Pancreas (tissue), 10 donors: ENCODE measurements at regions of chr6 and their contacts with region 1.

Region 1: DNA sequence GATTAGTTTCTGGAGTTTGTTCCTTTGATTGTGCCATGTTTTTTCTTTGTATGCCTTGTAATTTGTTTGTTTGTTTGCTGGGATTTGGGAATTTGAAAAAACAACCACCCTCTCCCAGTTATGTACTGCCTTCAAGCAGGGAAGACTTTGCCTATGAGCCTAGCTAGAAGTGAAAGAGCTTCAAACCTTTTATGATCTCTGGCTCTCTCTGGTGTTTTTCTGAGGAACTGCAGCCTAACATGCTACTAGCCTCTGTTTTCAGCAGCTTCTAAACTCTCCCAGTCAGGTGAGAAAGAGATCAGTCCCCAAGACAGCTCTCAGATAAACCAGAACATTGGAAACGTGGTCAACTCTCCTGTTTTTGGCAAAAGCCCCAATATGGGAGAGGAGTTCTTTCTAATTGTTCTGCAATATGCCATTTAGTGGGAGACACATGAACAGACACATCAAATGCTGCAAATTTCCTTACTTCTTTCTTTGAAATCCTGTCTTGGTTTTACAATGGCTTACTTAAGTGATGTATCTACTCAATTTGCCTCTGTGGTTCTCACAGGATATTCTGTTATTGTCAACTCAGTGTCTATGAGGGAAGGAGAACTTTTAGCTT is 58.9 kb upstream of the SERINC1 start:
- DNase-seq: peak in 3 of 6 donors; percentile 36 to 68 (median 37)
- ATAC-seq: peak; percentile 75 to 99 (median 98)
- H3K4me3 ChIP-seq: no peak overlapping the region
- H3K27ac ChIP-seq: no peak overlapping the region
- H3K4me1 ChIP-seq: no peaks in the 10 kb centered on the region
- H3K27me3 ChIP-seq: no peaks in the 10 kb centered on the region
- CTCF ChIP-seq: peak; percentile 54 to 81 (median 70)

Region 2: GRCh38 chr6:120908767-120909166 is 1621.8 kb before region 1 on chr6:
- intact Hi-C with region 1: no loop called
- DNase-seq: no peak
- ATAC-seq: no peak
- H3K4me3 ChIP-seq: no peak overlapping the region
- H3K27ac ChIP-seq: no peak overlapping the region
- H3K4me1 ChIP-seq: no peaks in the 10 kb centered on the region
- H3K27me3 ChIP-seq: no peaks in the 10 kb centered on the region
- CTCF ChIP-seq: no peak

Region 3: DNA sequence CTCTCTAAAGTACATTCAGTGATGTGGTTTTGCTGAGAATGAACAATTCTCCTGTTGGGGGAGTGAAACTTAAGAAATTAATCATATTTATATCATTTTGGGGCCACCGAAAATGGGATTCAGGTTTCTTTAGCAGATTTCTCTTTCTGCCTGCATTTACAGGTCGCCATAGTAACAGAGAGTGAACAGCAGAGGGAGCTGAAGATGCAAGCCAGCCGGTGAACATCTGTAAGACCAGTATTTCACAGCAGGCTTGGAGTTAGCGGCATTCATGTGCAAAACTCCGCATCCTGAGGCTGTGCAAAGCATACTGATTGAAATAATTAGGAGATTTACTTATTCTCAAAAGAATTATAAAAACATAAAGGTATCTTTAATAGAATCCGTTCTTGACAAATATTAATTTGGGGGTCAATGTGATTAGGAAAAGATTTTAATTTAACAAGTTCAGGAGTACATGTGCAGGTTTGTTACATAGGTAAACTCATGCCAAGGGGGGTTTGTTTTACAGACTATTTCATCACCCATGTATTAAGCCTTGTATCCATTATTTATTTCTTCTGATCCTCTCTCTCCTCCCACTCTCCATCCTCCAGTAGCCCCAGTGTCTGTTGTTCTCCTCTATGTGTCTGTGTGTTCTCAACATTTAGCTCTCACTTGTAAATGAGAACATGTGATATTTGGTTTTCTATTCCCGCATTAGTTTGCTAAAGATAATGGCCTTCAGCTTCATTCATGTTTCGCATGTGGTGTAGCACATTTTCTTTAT is 148.9 kb before region 1 on chr6:
- intact Hi-C with region 1: loop called in 1 of 3 experiments (anchors 10 kb)
- DNase-seq: peak in 3 of 6 donors; percentile 36 to 63 (median 43)
- ATAC-seq: peak; percentile 75 to 96 (median 94)
- H3K4me3 ChIP-seq: no peak overlapping the region
- H3K27ac ChIP-seq: no peak overlapping the region
- H3K4me1 ChIP-seq: no peaks in the 10 kb centered on the region
- H3K27me3 ChIP-seq: no peaks in the 10 kb centered on the region
- CTCF ChIP-seq: peak in 3 of 4 donors; percentile 45 to 65 (median 50)

Region 4: GRCh38 chr6:122491919-122492555 is 38.5 kb before region 1 on chr6:
- intact Hi-C with region 1: loop called in 1 of 3 experiments (anchors 5 kb)
- DNase-seq: peak; percentile 51 to 71 (median 64)
- ATAC-seq: peak; percentile 89 to 100 (median 98)
- H3K4me3 ChIP-seq: no peak overlapping the region
- H3K27ac ChIP-seq: no peak overlapping the region
- H3K4me1 ChIP-seq: peaks cover 0 to 4% (median 0%) of the 10 kb centered on the region in 3 donors
- H3K27me3 ChIP-seq: no peaks in the 10 kb centered on the region
- CTCF ChIP-seq: peak; percentile 71 to 84 (median 74)